Activated CD4-positive, alpha-beta memory T cell treated with anti-CD3 and anti-CD28 coated beads, Interleukin-2, amount 10 ng/mL, durations not matched to agents 7 days and 5 days (primary cell): ENCODE measurements at regions of chr9 and their contacts with region 1.

Region 1: DNA sequence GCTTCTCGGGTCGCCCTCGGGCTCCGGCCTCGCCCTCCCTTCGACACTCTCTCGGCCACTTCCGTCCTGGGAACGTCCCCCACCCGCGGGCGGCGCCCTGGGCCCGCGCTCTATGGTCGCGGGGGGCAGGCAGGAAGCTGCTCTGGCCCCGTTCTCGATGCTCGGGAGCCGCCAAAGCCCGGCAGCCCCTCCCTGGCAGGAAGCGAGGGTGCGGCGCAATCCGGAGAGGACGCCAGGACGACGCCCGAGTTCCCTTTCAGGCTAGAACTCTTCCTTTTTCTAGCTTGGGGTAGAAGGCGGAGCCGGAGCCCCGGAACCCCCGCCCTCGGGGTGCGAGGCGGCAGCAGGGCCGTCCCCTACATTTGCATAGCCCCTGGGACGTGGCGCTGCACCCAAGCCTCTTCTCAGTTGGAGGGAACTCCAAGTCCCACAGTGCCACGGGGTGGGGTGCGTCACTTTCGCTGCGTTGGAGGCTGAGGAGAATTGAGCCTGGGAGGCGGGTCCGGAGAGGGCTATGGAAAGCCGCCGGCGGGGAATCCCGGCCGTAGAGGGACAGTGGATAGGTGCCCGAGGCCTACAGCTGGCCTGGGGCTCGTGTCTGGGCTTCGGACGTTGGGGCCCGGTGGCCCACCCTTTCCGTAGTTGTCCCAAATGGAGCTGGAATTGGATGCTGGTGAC is at the starts of genes CREB3 and TLN1:
- DNase-seq: peak; percentile 99
- H3K4me3 Mint-ChIP-seq: no peak within 1 kb of the TSS
- H3K27ac Mint-ChIP-seq: peak within 1 kb of the TSS; percentile 89
- H3K4me1 Mint-ChIP-seq: peaks cover 23% of the 10 kb centered on the region
- H3K27me3 Mint-ChIP-seq: no peaks in the 10 kb centered on the region
- total RNA-seq, gene CREB3: 23.2 to 24.1 TPM
- total RNA-seq, gene TLN1: 341 to 354 TPM

Region 2: DNA sequence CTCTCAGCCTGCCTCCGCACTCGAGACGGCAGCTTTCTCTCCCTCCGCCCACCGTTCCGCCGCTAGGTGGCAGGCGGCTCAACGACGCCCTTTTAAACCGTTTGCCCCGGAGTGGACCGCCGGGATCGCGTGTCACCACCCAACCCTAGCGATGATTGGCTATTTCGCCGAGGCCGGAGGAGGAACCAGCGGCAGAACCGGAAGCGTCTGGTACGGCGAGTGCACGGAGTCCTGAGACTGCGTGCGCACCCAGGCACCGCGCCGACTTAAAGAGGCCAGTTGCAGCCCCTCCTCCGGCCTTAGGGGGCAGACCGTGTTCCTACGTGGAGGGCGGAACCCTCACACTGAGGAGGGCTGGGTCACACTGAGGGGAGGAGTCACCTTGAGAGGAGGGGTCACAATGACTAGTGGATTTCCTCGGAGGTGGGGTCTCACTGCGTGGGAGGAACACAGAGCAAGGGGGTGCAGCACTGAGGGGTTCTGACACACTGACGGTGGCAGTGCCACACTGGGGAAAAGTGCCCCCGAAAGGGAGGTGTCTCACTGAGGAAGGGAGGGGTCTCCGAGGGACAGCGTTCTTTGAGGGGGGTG is 128.2 kb before region 1 on chr9:
- CTCF ChIA-PET with region 1: interaction called, 20 read pairs
- POLR2A ChIA-PET with region 1: interaction called, 5 read pairs
- DNase-seq: peak; percentile 100
- H3K4me3 Mint-ChIP-seq: peak overlapping the region; percentile 96
- H3K27ac Mint-ChIP-seq: peak overlapping the region; percentile 99
- H3K4me1 Mint-ChIP-seq: peaks cover 30% of the 10 kb centered on the region
- H3K27me3 Mint-ChIP-seq: no peaks in the 10 kb centered on the region

Region 3: DNA sequence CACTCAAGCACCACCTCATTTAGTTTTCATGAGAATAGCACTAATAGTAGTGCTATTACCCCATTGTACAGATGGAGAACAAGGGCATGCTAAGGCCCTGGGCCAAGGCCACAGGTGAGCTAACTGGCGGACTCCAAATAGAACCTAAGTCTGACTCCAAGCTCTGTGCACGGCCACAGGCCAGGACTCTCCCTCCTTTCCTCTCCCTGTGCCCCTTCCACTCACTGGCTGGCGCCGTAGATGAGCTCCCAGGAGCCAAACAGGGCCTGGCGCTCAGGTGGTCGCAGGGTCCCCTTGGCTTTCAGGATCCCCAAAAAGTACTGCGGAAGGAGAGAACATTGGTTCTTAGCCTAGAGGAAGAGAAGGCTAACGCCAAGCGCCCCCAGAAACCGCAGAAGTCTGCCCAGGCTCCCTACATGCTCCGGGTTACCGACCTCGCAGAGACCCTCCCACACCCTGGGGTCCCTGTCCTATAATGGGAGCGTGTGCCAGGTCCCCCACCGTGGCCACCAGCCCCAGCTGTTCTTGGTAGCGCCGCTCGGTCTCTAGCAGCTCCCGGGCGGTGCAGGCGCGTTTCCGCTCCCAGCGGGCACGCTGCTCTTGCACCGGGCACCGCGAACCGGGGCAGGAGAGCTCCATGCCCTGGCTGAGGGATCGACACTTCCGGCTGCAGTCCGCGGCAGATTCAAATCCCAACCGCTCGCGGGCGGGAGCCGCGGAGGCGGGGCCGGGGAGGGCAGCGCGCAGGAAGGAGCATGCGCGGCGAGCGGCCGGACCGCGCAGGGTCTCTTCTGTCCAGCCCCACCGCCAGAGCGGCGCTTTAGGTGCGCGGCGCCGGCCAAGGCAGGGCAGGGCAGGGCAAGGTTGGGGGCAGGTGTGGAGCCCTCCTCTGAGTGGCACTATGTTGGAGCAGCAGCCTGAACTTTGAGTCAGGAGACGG is 67.5 kb before region 1 on chr9 and contains the start of gene ARHGEF39:
- CTCF ChIA-PET with region 1: interaction called, 95 read pairs
- POLR2A ChIA-PET with region 1: interaction called, 147 read pairs
- DNase-seq: peak; percentile 87
- H3K4me3 Mint-ChIP-seq: peak within 1 kb of the TSS; percentile 80
- H3K27ac Mint-ChIP-seq: peak within 1 kb of the TSS; percentile 86
- H3K4me1 Mint-ChIP-seq: peaks cover 67% of the 10 kb centered on the region
- H3K27me3 Mint-ChIP-seq: no peaks in the 10 kb centered on the region
- total RNA-seq, gene ARHGEF39: 19.1 to 19.9 TPM

Region 4: GRCh38 chr9:35748858-35749514 is 16.7 kb after region 1 on chr9 and contains the starts of genes GBA2 and RGP1:
- CTCF ChIA-PET with region 1: interaction called, 98 read pairs
- POLR2A ChIA-PET with region 1: interaction called, 117 read pairs
- DNase-seq: peak; percentile 76
- H3K4me3 Mint-ChIP-seq: peak within 1 kb of the TSS; percentile 94
- H3K27ac Mint-ChIP-seq: peak within 1 kb of the TSS; percentile 91
- H3K4me1 Mint-ChIP-seq: peaks cover 52% of the 10 kb centered on the region
- H3K27me3 Mint-ChIP-seq: no peaks in the 10 kb centered on the region
- total RNA-seq, gene GBA2: 45.8 to 49.1 TPM
- total RNA-seq, gene RGP1: 29.1 to 29.5 TPM

Region 5: GRCh38 chr9:35814841-35815543 is 82.7 kb after region 1 on chr9 and contains the start of gene HINT2:
- CTCF ChIA-PET with region 1: interaction called, 6 read pairs
- POLR2A ChIA-PET with region 1: interaction called, 11 read pairs
- DNase-seq: peak; percentile 99
- H3K4me3 Mint-ChIP-seq: peak within 1 kb of the TSS; percentile 87
- H3K27ac Mint-ChIP-seq: peak within 1 kb of the TSS; percentile 92
- H3K4me1 Mint-ChIP-seq: peaks cover 45% of the 10 kb centered on the region
- H3K27me3 Mint-ChIP-seq: peaks cover 4% of the 10 kb centered on the region
- total RNA-seq, gene HINT2: 77.8 to 79.2 TPM